Thyroid gland (tissue), 4 donors: ENCODE measurements at regions of chr3 and their contacts with region 1.

Region 1: DNA sequence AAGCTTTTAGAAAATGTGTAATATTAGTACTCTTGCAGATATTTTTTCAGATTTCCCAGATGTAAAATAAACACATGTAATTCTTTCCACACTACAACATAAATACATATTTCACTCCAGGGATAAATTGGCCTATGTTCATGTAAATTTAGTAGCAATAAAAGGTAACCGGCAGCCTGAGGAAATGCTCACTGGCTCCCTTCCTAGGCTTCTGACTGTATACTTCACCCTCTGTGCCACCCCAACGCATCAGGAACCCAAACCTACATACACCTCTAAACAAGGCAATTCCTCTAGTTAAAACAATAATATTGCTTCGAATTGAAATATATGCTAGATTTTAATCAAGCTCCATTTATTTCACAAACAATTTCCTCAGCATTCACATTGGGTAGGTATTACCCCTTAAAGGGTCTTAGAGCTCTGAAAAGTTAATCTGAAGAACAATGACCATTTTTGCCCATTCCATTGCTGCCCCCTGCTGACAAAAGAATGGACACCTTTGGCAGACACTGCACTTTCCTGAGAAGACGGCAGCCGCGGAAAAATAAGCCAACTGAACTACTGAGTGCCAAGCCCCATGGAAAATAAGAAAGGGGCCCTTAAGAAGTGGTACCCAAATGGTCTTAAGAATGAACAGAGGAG is 212.5 kb downstream of the OSBPL10 start:
- DNase-seq: peak; percentile 64 to 70
- H3K4me3 ChIP-seq: no peak overlapping the region
- H3K27ac ChIP-seq: no peak overlapping the region
- H3K4me1 ChIP-seq: peaks cover 0 to 9% of the 10 kb centered on the region in 2 donors
- H3K27me3 ChIP-seq: no peaks in the 10 kb centered on the region
- CTCF ChIP-seq: peak; percentile 19 to 77 (median 72)
- POLR2A ChIP-seq: no peak

Region 2: DNA sequence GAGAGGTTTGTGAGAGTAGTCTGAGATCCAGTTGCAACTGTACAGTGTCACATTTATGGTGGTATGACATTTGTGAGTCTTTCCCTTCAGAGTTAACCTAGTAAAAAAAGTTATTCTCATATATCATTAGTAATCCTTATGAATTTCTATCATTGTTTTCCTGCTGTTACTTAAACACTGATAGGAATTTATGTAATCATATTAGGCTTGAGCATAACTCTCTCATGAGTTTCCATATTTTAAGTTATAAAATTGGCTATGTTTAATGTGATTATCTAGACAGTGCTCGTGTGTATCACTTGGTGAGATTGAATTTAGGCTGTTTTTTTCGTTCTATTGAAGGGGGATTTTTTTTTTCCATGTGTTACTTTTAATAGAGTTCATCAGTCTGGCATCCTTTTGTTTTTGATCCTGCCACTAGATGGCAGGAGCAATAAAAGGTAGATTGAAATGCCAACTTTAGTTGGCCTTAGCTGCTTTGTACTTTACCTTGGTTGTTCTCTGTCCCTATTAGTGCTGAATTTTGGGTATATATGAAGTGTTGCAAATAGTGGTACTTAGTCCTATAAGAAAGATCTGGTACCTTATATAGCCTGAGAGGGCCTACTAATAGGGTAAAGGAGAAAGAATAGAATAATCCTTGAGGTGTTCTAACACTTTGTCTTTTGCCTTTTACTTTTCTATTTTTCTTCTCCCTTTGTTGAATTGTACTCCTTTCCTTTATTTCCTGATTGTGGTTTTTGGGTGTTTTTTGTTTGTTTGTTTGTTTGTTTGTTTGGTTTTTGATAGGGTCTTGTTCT is 217.9 kb before region 1 on chr3:
- intact Hi-C with region 1: loop called (anchors 10 kb)
- DNase-seq: no peak
- H3K4me3 ChIP-seq: no peak overlapping the region
- H3K27ac ChIP-seq: no peak overlapping the region
- H3K4me1 ChIP-seq: peaks cover 25 to 31% of the 10 kb centered on the region in 2 donors
- H3K27me3 ChIP-seq: no peaks in the 10 kb centered on the region
- CTCF ChIP-seq: peak in 5 of 6 experiments; percentile 35 to 74 (median 51)
- POLR2A ChIP-seq: no peak

Region 3: GRCh38 chr3:31610700-31611275 is 157.8 kb before region 1 on chr3:
- intact Hi-C with region 1: loop called (anchors 5 kb)
- DNase-seq: peak; percentile 17 to 19
- H3K4me3 ChIP-seq: no peak overlapping the region
- H3K27ac ChIP-seq: no peak overlapping the region
- H3K4me1 ChIP-seq: no peaks in the 10 kb centered on the region
- H3K27me3 ChIP-seq: no peaks in the 10 kb centered on the region
- CTCF ChIP-seq: peak in 5 of 6 experiments; percentile 19 to 70 (median 55)
- POLR2A ChIP-seq: no peak